Lower leg skin (tissue), 4 donors: ENCODE measurements at regions of chr6 and their contacts with region 1.

Region 1: DNA sequence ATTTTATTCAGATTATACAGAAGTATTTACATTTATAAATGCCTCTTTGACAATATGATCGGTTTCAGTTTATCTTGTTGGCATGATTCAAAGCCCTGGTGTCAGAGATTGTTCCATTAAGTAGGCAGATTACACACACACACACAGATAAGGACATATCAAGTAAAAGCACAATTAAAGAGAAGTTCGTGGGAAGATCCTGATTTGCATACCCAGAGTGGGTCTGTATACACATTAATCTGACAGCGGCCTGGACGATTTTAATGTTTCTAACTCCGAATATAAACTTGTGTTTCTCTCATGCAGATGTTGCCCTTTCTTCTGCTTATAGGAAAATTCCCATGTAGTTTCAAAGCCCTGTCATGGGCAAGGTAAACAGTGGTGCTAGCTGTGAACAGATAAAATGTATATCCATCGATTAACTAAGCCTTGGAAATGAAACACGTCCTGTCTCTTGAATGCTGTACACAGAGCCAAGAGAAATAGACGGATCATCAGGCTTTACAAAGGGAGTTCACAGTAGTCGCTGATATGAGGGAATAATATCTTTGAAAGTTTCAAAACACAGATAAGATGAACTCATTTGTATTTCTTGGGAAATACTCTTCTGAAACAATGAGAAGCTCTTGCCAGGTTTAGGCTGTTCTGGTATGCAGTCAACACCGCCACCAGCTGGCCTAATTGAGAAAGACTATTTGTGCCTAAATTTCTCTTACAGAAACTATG is 108.2 kb upstream of the GMDS start:
- DNase-seq: peak in 1 of 2 donors; percentile 67
- H3K4me3 ChIP-seq: no peak overlapping the region
- CTCF ChIP-seq: peak in 1 of 3 donors; percentile 25
- POLR2A ChIP-seq: no peak

Region 2: GRCh38 chr6:1609648-1610496 is 743.7 kb before region 1 on chr6 and contains the start of gene FOXC1:
- intact Hi-C with region 1: loop called (anchors 5 kb)
- DNase-seq: peak; percentile 84 to 96
- H3K4me3 ChIP-seq: peak within 1 kb of the TSS; percentile 60
- CTCF ChIP-seq: no peak
- POLR2A ChIP-seq: no peak
- total RNA-seq, gene FOXC1: 7.1 to 39.2 (median 27.5) TPM

Region 3: DNA sequence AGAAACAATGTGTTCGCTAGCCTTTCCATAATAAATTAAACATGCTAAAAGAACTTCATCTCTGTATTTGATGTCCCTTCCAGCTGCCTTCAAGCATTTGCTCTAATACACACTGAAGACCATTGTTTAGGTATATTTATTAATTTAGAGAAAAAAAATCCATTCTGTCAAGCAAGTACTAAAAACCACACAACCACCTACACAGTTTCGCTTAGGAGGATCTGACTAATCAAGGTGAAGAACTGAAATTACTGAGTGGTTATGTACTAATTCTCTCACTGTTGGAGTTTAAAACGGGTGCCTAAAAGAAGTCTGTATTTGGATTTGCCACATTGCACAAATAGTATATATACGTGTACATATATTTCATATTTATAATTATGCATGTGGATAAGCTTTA is 167.1 kb before region 1 on chr6:
- intact Hi-C with region 1: no loop called
- DNase-seq: no peak
- H3K4me3 ChIP-seq: no peak overlapping the region
- CTCF ChIP-seq: no peak
- POLR2A ChIP-seq: no peak